PC-9 (cell line): ENCODE measurements at regions of chr7 and their contacts with region 1.

Region 1: DNA sequence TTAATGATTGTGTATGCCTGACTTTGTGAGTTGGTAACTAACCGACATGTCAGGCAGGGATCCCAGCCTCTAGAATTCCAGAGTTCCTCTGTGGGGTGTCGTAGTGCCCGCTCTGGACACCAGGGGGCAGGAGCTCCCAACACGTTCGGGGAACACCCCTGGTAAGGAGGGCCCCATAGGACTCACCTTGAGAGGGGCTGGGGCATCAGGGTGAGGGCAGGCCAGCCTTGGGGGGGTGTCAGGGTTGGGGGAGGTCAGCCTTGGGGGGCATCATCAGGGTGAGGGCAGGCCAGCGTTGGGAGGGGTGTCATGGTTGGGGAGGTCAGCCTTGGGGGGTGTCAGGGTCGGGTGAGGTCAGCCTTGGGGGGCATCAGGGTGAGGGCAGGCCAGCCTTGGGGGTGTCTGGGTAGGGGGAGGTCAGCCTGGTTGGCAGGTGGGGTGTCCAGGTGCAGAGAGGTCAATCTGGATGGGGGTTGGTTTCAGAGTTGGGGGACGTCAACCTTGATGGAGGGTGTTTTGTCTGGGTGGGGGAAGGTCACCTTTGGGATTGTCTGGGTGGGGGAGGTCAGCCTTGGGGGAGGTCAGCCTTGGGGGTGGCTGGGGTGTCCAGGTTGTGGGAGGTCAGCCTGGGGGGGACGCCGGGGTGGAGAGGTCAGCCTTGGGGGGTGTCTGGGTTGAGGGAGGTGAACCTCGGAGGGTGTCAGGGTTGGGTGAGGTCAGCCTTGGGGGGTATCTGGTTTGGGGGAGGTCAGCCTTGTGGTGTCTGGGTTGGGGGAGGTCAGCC is 45.6 kb upstream of the SUN1 start:
- DNase-seq: peak; percentile 54 to 81
- H3K4me3 ChIP-seq: no peak overlapping the region
- H3K27ac ChIP-seq: no peak overlapping the region
- H3K4me1 ChIP-seq: no peaks in the 10 kb centered on the region
- H3K27me3 ChIP-seq: no peaks in the 10 kb centered on the region
- CTCF ChIP-seq: peak; percentile 98

Region 2: DNA sequence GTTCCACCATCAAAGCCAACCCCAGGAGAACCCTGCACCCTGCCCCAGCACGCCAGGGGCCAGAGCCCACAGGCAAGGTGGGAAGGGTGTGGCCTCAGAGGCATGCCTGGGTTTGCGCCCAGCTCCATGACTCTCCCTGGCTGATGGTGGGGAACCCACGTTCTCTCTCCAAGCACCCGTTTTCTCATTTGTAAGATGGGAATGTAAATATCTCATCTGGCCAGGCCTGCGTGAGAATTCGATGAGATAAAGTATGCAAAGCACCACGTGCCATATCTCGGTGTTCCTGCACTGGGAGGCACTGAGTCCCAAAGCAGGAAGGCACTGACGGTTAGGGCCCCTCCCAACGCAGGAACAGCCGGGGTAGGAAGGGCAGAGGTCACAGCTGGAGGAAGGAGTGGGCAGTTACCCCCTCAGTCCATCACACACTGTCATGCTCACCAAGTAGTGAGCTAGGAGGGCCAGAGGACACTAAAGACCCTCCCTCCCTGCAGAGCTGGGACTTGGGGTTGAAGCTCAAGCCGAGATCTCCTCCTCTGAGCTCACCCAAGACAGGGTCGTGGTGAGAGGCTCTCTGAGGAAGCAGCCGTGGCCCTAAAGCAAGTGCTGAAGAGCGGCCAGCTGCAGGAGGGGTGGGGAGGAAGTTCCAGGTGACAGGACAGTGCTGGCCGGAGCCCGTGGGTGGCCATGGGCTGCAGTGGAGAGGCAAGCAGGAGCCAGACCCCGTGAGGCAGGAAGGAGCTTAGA is 87.4 kb before region 1 on chr7:
- CTCF ChIA-PET with region 1: no interaction called
- POLR2A ChIA-PET with region 1: no interaction called
- intact Hi-C with region 1: no loop called
- DNase-seq: no peak
- H3K4me3 ChIP-seq: no peak overlapping the region
- H3K27ac ChIP-seq: no peak overlapping the region
- H3K4me1 ChIP-seq: no peaks in the 10 kb centered on the region
- H3K27me3 ChIP-seq: no peaks in the 10 kb centered on the region
- CTCF ChIP-seq: no peak

Region 3: GRCh38 chr7:842431-843031 is 55.9 kb after region 1 on chr7:
- CTCF ChIA-PET with region 1: interaction called, 8 read pairs
- POLR2A ChIA-PET with region 1: interaction called, 10 read pairs
- intact Hi-C with region 1: no loop called
- DNase-seq: no peak
- H3K4me3 ChIP-seq: no peak overlapping the region
- H3K27ac ChIP-seq: no peak overlapping the region
- H3K4me1 ChIP-seq: no peaks in the 10 kb centered on the region
- H3K27me3 ChIP-seq: no peaks in the 10 kb centered on the region
- CTCF ChIP-seq: no peak

Region 4: GRCh38 chr7:854118-854775 is 67.6 kb after region 1 on chr7:
- CTCF ChIA-PET with region 1: no interaction called
- POLR2A ChIA-PET with region 1: no interaction called
- intact Hi-C with region 1: loop called (anchors 5 kb)
- DNase-seq: no peak
- H3K4me3 ChIP-seq: no peak overlapping the region
- H3K27ac ChIP-seq: no peak overlapping the region
- H3K4me1 ChIP-seq: no peaks in the 10 kb centered on the region
- H3K27me3 ChIP-seq: no peaks in the 10 kb centered on the region
- CTCF ChIP-seq: no peak

Region 5: GRCh38 chr7:1144269-1144771 is 357.7 kb after region 1 on chr7:
- CTCF ChIA-PET with region 1: no interaction called
- POLR2A ChIA-PET with region 1: no interaction called
- intact Hi-C with region 1: no loop called
- DNase-seq: no peak
- H3K4me3 ChIP-seq: no peak overlapping the region
- H3K27ac ChIP-seq: no peak overlapping the region
- H3K4me1 ChIP-seq: peaks cover 3% of the 10 kb centered on the region
- H3K27me3 ChIP-seq: no peaks in the 10 kb centered on the region
- CTCF ChIP-seq: no peak; the same call in 1 of the 2 replicates

Region 6: GRCh38 chr7:1175967-1176851 is 389.5 kb after region 1 on chr7:
- CTCF ChIA-PET with region 1: no interaction called
- POLR2A ChIA-PET with region 1: no interaction called
- intact Hi-C with region 1: loop called (anchors 5 kb)
- DNase-seq: peak; percentile 71 to 94
- H3K4me3 ChIP-seq: peak overlapping the region; percentile 41; the same call in 1 of the 2 replicates
- H3K27ac ChIP-seq: no peak overlapping the region
- H3K4me1 ChIP-seq: peaks cover 11% of the 10 kb centered on the region
- H3K27me3 ChIP-seq: 0 out of 2 replicates have a peak, but pooled peaks cover 10% of the 10 kb centered on the region
- CTCF ChIP-seq: peak; percentile 99